ENCODE measurements at regions of chr14 and their contacts with region 1.

Region 1: DNA sequence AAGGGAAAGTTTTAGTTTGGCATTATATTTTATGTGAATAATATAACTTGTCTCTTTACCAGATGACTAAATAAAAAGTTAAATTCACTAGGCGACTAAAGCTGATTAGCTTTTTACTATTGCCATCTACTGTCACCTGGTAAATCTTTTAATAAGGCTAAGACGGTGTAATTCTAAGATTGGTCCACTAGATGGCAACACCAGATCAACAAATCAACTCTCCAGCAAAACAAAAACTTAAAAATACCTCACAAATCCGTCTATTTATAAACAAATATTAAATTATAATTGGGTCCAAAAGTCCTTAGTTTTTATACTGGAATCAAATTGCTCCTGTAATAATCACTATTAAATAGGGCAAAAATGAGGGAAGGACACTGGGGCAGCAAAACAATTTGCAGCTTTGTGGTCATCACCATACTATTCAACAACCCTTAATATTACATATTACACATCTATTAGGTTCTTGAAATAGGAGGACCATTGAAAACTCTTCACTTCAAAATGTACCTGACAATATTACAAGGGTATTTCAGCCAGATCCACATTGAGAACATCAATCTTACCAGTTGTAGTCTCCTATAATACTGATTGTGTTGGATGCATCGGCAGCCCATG is 47.9 kb downstream of the GALC start:
- DNase-seq: no peak
- ATAC-seq: no peak
- H3K4me3 Mint-ChIP-seq: no peak overlapping the region
- H3K27ac Mint-ChIP-seq: no peak overlapping the region
- H3K4me1 Mint-ChIP-seq: no peaks in the 10 kb centered on the region
- H3K27me3 Mint-ChIP-seq: no peaks in the 10 kb centered on the region
- CTCF ChIP-seq: no peak

Region 2: DNA sequence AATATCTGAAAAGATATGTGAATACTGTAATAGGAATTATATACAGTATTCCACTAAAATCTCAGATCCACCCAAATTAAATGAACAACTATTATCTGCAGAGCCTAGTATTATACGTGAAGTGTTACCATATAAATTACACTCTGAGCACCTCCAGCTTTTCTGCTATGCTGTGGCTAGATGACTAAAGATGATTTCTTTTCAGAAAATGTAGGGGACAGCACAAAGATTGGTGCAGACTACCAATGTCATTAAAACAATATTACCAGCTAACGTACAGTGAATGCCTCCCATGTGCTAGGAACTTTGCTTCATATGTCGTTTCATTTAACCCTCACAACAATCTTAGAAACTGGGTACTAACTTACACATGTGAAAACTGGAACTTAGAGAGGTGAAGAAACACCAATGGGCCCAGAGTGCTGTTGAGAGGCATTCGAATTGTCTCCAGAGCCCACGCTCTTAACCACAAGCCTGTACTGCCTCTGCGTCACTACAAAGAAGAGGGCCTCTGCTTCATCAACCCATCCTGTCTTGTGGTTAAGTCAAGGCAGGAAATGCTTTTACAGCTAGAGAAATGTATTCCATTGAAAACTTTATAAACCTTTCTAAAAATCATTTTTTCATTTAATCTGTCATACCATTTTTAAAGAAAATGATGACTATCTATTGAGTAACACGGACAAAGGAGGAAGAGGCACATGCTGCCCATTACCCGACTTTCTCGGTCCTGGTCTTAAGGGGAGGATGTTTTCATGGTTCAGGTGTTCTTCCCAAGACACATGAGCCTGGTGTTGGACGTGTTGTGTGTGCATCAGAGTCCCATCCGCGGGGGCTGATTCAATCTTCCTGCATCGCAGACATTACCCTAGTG is 61.1 kb after region 1 on chr14:
- CTCF ChIA-PET with region 1: interaction called, 14 read pairs
- POLR2A ChIA-PET with region 1: interaction called, 18 read pairs
- intact Hi-C with region 1: no loop called
- DNase-seq: no peak
- ATAC-seq: peak; percentile 79
- H3K4me3 Mint-ChIP-seq: peak overlapping the region; percentile 83
- H3K27ac Mint-ChIP-seq: peak overlapping the region; percentile 84
- H3K4me1 Mint-ChIP-seq: peaks cover 77% of the 10 kb centered on the region
- H3K27me3 Mint-ChIP-seq: no peaks in the 10 kb centered on the region
- CTCF ChIP-seq: no peak

Region 3: GRCh38 chr14:88168498-88169165 is 223.5 kb after region 1 on chr14:
- CTCF ChIA-PET with region 1: interaction called, 105 read pairs
- POLR2A ChIA-PET with region 1: no interaction called
- intact Hi-C with region 1: loop called (anchors 1 kb)
- DNase-seq: no peak
- ATAC-seq: peak; percentile 92
- H3K4me3 Mint-ChIP-seq: no peak overlapping the region
- H3K27ac Mint-ChIP-seq: no peak overlapping the region
- H3K4me1 Mint-ChIP-seq: peaks cover 4% of the 10 kb centered on the region
- H3K27me3 Mint-ChIP-seq: peaks cover 33% of the 10 kb centered on the region
- CTCF ChIP-seq: no peak

Region 4: GRCh38 chr14:88233915-88234314 is 288.8 kb after region 1 on chr14:
- CTCF ChIA-PET with region 1: interaction called, 3 read pairs
- POLR2A ChIA-PET with region 1: no interaction called
- intact Hi-C with region 1: loop called (anchors 1 kb)
- DNase-seq: no peak
- ATAC-seq: no peak
- H3K4me3 Mint-ChIP-seq: no peak overlapping the region
- H3K27ac Mint-ChIP-seq: no peak overlapping the region
- H3K4me1 Mint-ChIP-seq: no peaks in the 10 kb centered on the region
- H3K27me3 Mint-ChIP-seq: peaks cover 11% of the 10 kb centered on the region
- CTCF ChIP-seq: no peak

Region 5: DNA sequence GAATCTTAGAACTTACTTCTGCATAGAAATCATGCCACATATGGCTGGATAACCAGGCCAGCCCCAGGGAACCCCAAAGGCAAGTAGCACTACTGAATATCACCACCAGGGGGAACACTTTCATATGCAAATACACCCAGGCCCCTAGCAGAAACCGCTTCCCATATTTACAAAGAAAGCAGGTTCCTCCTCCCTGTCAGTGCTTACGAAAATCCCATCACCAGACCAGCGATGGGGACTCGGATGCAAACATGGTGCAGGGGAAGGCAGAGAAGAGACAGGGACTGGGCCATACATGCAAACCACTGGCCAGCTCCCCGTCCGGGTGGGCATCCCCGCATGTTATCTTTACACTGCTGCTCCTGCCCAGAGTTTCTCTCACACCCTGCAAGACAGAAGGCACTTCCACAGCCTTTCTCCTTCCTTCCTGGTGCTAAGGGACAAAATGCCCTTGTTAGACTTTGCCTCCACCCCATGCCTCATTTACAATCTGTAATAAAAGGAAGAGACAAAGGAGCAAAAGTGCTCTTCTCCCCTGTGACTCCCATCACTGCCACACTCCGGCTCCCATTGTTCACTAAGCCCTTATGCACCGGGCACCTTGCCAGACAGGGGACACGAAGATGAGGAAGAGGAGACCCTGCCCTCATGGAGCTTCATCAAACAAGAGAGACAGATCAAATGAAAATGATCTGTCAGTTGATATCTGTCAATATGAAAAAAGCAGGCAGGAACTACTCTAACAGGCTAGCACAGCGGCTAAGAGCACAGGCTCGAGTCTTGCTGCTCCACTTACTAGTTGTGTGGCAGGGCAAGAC is 547.4 kb after region 1 on chr14:
- CTCF ChIA-PET with region 1: no interaction called
- POLR2A ChIA-PET with region 1: no interaction called
- intact Hi-C with region 1: loop called (anchors 5 kb)
- DNase-seq: peak; percentile 16
- ATAC-seq: peak; percentile 72
- H3K4me3 Mint-ChIP-seq: no peak overlapping the region
- H3K27ac Mint-ChIP-seq: no peak overlapping the region
- H3K4me1 Mint-ChIP-seq: peaks cover 2% of the 10 kb centered on the region
- H3K27me3 Mint-ChIP-seq: no peaks in the 10 kb centered on the region
- CTCF ChIP-seq: no peak

Region 6: GRCh38 chr14:88804035-88804434 is 858.9 kb after region 1 on chr14:
- CTCF ChIA-PET with region 1: no interaction called
- POLR2A ChIA-PET with region 1: no interaction called
- intact Hi-C with region 1: no loop called
- DNase-seq: no peak
- ATAC-seq: no peak
- H3K4me3 Mint-ChIP-seq: no peak overlapping the region
- H3K27ac Mint-ChIP-seq: no peak overlapping the region
- H3K4me1 Mint-ChIP-seq: no peaks in the 10 kb centered on the region
- H3K27me3 Mint-ChIP-seq: peaks cover 39% of the 10 kb centered on the region
- CTCF ChIP-seq: no peak